OCI-LY7 (cell line): ENCODE measurements at regions of chr17 and their contacts with region 1.

Region 1: GRCh38 chr17:73956669-73957465 is 246.6 kb upstream of the RPL38 start:
- DNase-seq: peak; percentile 68
- H3K4me3 ChIP-seq: no peak overlapping the region
- H3K27ac ChIP-seq: no peak overlapping the region
- H3K4me1 ChIP-seq: no peaks in the 10 kb centered on the region
- CTCF ChIP-seq: peak; percentile 90

Region 2: DNA sequence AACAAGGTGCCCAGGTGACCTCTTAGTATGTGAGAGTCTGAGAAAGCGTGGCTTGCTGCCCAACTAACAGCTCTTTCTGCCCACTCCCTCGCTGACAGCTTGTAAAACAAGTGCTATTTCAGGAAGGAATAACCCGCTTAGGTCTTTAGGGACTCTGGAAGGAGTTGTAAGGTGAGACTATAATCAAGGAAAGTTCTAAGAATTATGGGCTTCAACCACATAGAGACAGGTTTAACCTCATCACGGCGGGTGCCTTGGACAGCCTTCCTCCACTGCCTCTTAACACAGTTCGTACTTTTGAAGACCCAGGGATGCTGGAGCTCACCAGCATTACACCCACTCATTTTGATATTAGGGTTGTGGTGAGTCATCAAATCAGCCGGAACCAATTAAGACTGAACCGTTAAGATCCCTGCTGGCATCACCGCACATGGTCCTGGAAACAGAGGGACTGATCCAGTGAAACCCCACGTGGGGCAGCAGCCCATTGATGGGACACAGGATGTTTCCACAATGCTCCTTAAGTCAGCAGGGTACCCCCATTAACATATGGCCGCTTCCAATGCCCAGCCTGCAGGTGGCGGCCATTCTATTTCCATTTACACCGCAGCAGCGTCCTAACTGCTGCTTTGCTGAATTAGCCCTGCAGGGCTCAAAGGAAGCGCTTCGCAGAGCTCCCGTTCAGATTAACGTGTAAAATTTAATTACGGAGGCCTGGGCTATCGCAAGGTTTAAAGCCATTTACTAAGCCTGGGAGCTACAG is 136.0 kb before region 1 on chr17:
- CTCF ChIA-PET with region 1: no interaction called
- POLR2A ChIA-PET with region 1: no interaction called
- intact Hi-C with region 1: loop called (anchors 10 kb)
- DNase-seq: peak; percentile 14
- H3K4me3 ChIP-seq: no peak overlapping the region
- H3K27ac ChIP-seq: no peak overlapping the region
- H3K4me1 ChIP-seq: no peaks in the 10 kb centered on the region
- CTCF ChIP-seq: peak; percentile 46; the same call in 1 of the 2 replicates

Region 3: GRCh38 chr17:73863761-73864535 is 92.9 kb before region 1 on chr17:
- CTCF ChIA-PET with region 1: no interaction called
- POLR2A ChIA-PET with region 1: no interaction called
- intact Hi-C with region 1: no loop called
- DNase-seq: no peak
- H3K4me3 ChIP-seq: no peak overlapping the region
- H3K27ac ChIP-seq: no peak overlapping the region
- H3K4me1 ChIP-seq: no peaks in the 10 kb centered on the region
- CTCF ChIP-seq: no peak

Region 4: GRCh38 chr17:73888862-73889261 is 68.0 kb before region 1 on chr17:
- CTCF ChIA-PET with region 1: no interaction called
- POLR2A ChIA-PET with region 1: no interaction called
- intact Hi-C with region 1: no loop called
- DNase-seq: no peak
- H3K4me3 ChIP-seq: no peak overlapping the region
- H3K27ac ChIP-seq: no peak overlapping the region
- H3K4me1 ChIP-seq: no peaks in the 10 kb centered on the region
- CTCF ChIP-seq: no peak

Region 5: GRCh38 chr17:74332763-74333283 is 376.0 kb after region 1 on chr17:
- CTCF ChIA-PET with region 1: no interaction called
- POLR2A ChIA-PET with region 1: no interaction called
- intact Hi-C with region 1: no loop called
- DNase-seq: peak; percentile 44
- H3K4me3 ChIP-seq: no peak overlapping the region
- H3K27ac ChIP-seq: no peak overlapping the region
- H3K4me1 ChIP-seq: peaks cover 13% of the 10 kb centered on the region
- CTCF ChIP-seq: no peak